A549 (cell line): ENCODE measurements at regions of chr14 and their contacts with region 1.

Region 1: DNA sequence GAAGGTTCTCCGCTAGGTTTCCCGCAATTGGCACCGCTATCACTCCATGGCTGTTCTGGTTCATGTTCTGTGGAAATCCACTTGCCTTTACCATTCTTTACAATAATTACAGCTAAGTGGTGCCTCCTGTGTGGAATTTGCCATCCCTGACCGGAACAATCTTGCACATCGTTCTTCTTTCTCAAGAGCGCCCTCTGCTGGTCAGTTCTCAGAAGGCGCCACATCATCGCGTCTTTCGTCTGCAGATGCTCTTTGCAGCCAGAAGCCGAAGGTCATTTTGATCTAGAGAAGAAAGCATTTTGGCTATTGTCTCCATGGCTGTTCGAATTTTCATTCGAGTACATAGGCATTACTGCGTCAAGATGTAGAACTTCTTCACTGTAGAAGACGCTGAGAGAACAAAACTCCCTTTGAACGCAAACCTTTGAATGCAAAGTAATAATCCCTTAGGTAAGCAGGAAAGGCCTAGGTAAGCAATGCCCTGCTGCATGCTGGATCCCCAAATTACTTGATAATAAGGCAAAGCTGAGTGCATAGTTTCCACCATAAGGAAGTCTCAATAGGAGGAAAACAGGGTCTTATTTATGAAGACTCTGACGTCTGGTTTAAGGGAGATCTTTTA is 10.1 kb upstream of the RTRAF start:
- DNase-seq: peak; percentile 48 to 79
- ATAC-seq: peak; percentile 85 to 96
- H3K4me3 ChIP-seq: no peak overlapping the region
- H3K27ac ChIP-seq: no peak overlapping the region
- H3K4me1 ChIP-seq: no peaks in the 10 kb centered on the region
- CTCF ChIP-seq: peak; percentile 86
- EP300 ChIP-seq: no peak
- POLR2A ChIP-seq: no peak
- RAD21 ChIP-seq: peak; percentile 82 to 85

Region 2: DNA sequence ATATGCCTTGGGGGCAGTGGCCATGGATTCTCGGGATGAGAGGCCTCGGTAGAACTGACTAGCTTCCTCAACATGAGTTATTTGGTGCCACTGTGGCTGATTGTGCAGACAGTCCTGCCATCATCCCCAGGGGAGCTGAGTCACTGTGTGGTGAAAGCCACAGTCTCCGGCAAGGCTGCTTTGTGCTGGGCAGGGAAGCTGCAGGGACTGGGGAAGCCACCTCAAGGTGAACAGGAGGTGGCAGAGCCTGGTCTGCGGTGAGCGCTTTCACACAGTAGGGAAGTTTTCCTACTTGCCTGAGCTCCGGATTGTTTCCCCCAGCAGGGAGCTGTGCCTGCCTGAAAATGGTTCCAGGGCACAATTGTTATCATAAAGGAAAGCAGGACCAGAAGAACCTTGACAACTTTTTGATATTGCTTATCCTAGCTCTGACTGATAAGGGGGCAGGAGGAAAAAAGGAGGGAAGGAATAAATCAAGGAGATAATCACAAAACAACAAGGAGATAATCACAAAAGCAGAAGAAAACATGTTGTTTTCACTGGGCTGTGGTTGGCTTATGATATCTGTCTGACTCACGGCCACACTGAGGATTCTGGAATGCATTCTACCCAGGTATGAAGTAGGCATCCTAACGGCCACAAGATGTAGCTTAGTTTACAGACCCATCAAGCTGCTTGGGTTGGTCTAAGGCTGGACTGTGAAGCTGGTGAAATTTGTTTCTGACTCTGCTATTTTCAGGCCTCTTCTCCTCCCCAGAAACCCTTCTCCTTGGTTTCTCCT is 151.0 kb before region 1 on chr14:
- CTCF ChIA-PET with region 1: interaction called, 17 read pairs
- POLR2A ChIA-PET with region 1: no interaction called
- DNase-seq: peak; percentile 31 to 33
- ATAC-seq: peak; percentile 87 to 90
- H3K4me3 ChIP-seq: no peak overlapping the region
- H3K27ac ChIP-seq: peak overlapping the region; percentile 23 to 65; a peak in 4 of 6 replicates
- H3K4me1 ChIP-seq: peaks cover 10% of the 10 kb centered on the region
- CTCF ChIP-seq: no peak
- EP300 ChIP-seq: no peak
- POLR2A ChIP-seq: no peak
- RAD21 ChIP-seq: no peak

Region 3: DNA sequence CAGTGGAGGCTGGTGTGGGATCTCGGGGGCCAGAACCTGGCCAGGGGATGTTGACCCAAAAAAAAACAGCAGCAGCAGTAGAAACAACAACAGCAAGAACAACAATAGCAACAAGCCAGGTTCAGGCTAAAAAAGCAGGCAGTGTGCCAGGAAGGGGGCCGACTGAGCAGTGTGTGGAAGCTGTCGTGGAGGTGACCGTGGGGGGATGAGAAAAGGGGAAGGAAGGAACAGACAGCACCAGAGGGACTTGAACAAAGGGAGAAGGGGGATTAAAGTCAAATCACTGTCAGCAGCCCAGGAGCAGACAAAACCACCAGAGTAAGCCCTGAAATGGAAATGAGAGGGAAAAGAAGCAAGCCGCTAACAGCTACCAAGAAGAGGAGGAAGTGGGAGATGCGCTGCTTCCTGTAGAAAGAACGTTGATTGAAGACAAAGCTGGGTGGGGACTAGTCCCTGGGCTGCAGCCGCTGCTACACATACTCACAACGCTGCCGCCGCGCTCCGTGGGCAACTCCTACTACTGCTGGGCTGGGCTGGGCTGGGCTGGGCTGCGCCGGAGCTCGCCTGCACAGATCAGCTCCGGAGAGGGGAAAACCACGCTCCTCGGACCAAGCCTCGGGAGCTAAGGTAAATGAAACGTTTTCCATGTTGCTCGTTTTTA is 118.9 kb before region 1 on chr14 and contains the start of gene GNG2:
- CTCF ChIA-PET with region 1: interaction called, 21 read pairs
- POLR2A ChIA-PET with region 1: no interaction called
- DNase-seq: peak; percentile 40 to 56
- ATAC-seq: peak; percentile 99 to 100
- H3K4me3 ChIP-seq: peak within 1 kb of the TSS; percentile 51
- H3K27ac ChIP-seq: peak within 1 kb of the TSS; percentile 58 to 71
- H3K4me1 ChIP-seq: 0 out of 3 replicates have a peak, but pooled peaks cover 4% of the 10 kb centered on the region
- CTCF ChIP-seq: no peak
- EP300 ChIP-seq: no peak
- POLR2A ChIP-seq: no peak
- RAD21 ChIP-seq: no peak
- polyA plus RNA-seq, gene GNG2: 2.2 and 3.0 TPM in 2 replicates

Region 4: DNA sequence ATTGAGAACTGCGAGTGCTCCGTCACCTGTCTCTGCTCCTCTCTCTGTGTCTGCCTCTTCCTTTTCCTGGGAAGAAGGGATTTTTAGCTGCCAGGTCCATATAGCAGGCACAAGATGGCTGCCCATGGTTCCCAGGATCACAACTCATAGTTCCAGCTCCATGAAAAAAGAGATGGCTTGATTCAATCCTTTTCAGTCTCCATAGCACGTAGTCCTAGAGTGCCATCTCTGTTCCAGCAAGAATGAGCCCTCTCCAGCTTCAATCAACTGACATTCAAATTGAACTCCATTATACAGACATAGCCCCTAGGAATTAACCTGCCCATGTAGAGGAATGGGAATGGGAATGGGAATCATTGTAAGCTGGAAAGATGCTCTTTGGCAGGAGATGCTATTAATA is 24.5 kb before region 1 on chr14:
- CTCF ChIA-PET with region 1: interaction called, 16 read pairs
- POLR2A ChIA-PET with region 1: no interaction called
- DNase-seq: no peak
- ATAC-seq: no peak
- H3K4me3 ChIP-seq: no peak overlapping the region
- H3K27ac ChIP-seq: no peak overlapping the region
- H3K4me1 ChIP-seq: no peaks in the 10 kb centered on the region
- CTCF ChIP-seq: no peak
- EP300 ChIP-seq: no peak
- POLR2A ChIP-seq: no peak
- RAD21 ChIP-seq: no peak

Region 5: DNA sequence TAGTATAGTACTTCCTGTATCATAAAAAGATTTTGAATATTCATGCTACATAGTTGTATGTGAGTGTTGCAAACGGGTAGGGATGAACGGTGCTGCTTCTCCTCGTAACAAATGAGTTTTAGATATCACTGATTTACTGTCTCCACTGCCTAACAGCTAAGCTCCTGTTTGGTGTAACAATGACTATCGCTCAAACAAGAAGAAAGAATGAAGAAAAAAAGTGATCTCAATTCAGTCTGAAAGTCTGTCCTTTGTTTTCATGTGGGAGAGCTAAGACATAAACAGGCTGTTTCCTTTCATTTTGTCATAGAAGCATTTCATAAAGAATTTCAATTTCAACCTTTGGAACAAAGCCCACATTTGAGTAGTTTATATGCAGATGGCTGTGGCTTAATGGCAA is 15.9 kb before region 1 on chr14:
- CTCF ChIA-PET with region 1: interaction called, 44 read pairs
- POLR2A ChIA-PET with region 1: no interaction called
- DNase-seq: no peak
- ATAC-seq: no peak
- H3K4me3 ChIP-seq: no peak overlapping the region
- H3K27ac ChIP-seq: no peak overlapping the region
- H3K4me1 ChIP-seq: no peaks in the 10 kb centered on the region
- CTCF ChIP-seq: no peak
- EP300 ChIP-seq: no peak
- POLR2A ChIP-seq: no peak
- RAD21 ChIP-seq: no peak

Region 6: DNA sequence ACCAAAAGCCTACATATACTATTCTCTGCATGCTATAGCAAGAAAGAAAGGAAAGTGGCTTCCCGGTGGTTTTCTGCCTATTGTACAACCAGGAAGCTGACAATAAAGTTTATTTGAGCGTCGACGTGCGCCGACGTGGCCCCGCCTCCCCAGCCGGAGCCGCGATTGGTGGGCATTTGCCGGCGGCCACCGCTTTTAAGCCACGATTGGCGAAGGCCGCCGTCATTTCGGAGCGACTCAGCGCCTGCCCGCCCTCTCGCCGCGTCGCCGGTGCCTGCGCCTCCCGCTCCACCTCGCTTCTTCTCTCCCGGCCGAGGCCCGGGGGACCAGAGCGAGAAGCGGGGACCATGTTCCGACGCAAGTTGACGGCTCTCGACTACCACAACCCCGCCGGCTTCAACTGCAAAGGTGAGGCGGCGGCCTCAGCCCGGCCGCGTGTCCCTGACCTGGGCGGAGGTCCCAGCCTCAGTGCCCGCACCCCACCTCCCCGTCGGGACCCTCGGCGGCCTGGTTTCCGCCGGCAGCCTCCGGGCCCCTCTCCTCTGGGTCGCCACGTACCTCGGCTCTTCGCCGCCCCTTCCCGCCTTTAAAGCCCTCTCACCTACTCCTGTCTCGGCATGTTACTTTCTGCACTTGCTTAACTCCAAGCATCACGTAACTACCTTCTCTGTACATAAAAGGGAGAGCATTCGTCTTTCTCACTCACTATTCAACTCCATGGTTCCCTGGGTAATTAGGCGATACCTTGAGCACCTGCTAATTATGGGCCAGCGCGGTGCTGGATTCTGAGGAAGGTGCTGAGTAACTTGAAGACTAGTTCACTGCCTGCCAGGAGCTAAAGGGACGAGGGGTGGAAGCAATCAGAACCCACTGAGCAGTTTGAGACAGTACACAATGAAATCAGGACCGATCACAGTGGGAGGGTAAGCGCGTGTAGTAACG is 10.4 kb after region 1 on chr14 and contains the start of gene RTRAF:
- CTCF ChIA-PET with region 1: interaction called, 18 read pairs
- POLR2A ChIA-PET with region 1: no interaction called
- DNase-seq: peak; percentile 79 to 94
- ATAC-seq: peak; percentile 98 to 99
- H3K4me3 ChIP-seq: peak within 1 kb of the TSS; percentile 86
- H3K27ac ChIP-seq: peak within 1 kb of the TSS; percentile 83 to 92
- H3K4me1 ChIP-seq: peaks cover 12% of the 10 kb centered on the region; the same call in 2 of the 3 replicates
- CTCF ChIP-seq: no peak
- EP300 ChIP-seq: no peak
- POLR2A ChIP-seq: peak; percentile 78
- RAD21 ChIP-seq: no peak
- polyA plus RNA-seq, gene RTRAF: 289 and 341 TPM in 2 replicates

Region 7: GRCh38 chr14:51996148-51996746 is 17.0 kb after region 1 on chr14:
- CTCF ChIA-PET with region 1: interaction called, 18 read pairs
- POLR2A ChIA-PET with region 1: no interaction called
- DNase-seq: peak in 1 of 2 experiments; percentile 54
- ATAC-seq: no peak
- H3K4me3 ChIP-seq: no peak overlapping the region
- H3K27ac ChIP-seq: no peak overlapping the region
- H3K4me1 ChIP-seq: peaks cover under 1% of the 10 kb centered on the region; the same call in 1 of the 3 replicates
- CTCF ChIP-seq: peak; percentile 70
- EP300 ChIP-seq: no peak
- POLR2A ChIP-seq: no peak
- RAD21 ChIP-seq: peak; percentile 60 to 74